Activated CD8-positive, alpha-beta T cell treated with anti-CD3 and anti-CD28 coated beads for 36 hours (primary cell): ENCODE measurements at regions of chr14 and their contacts with region 1.

Region 1: GRCh38 chr14:93115069-93115820 is 480 bp downstream of the ITPK1 start:
- DNase-seq: peak; percentile 84
- ATAC-seq: peak; percentile 71
- H3K4me3 Mint-ChIP-seq: peak overlapping the region; percentile 77
- H3K27ac Mint-ChIP-seq: peak overlapping the region; percentile 67
- H3K4me1 Mint-ChIP-seq: peaks cover 28% of the 10 kb centered on the region
- H3K27me3 Mint-ChIP-seq: no peaks in the 10 kb centered on the region
- CTCF ChIP-seq: no peak

Region 2: GRCh38 chr14:93042968-93043940 is 72.0 kb before region 1 on chr14:
- CTCF ChIA-PET with region 1: interaction called, 13 read pairs
- POLR2A ChIA-PET with region 1: no interaction called
- intact Hi-C with region 1: no loop called
- DNase-seq: no peak
- ATAC-seq: peak; percentile 47
- H3K4me3 Mint-ChIP-seq: no peak overlapping the region
- H3K27ac Mint-ChIP-seq: peak overlapping the region; percentile 43
- H3K4me1 Mint-ChIP-seq: peaks cover 76% of the 10 kb centered on the region
- H3K27me3 Mint-ChIP-seq: no peaks in the 10 kb centered on the region
- CTCF ChIP-seq: no peak

Region 3: DNA sequence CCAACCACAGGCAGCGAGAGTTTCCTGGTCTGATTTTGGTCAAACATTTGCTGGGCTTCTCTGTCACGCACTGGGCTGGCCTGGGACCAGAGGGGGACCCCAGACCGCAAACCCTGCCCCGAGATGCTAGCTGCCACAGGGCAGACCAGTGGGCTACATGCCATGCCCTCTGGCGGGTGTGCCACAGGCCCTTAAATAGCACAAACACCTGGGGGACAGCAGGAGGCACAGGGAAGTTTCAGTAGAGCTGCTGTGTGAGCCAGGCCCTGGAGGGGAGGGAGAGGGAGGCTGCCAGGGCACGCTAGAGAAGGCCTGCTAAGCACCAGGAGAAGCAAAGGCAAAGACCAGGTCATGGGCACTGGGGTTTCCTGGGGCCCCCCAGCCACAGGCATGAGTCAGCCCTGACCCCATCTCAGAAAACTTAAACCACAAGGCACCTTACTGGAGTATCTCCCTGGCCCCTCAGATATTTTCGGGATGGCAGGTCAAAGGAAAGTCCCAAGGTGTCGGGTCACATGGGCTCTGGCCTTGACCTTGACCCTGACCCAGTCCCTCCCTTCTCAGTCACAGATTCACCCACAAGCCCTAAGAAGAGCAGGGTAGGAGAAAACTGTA is 28.7 kb before region 1 on chr14:
- CTCF ChIA-PET with region 1: interaction called, 45 read pairs
- POLR2A ChIA-PET with region 1: no interaction called
- intact Hi-C with region 1: no loop called
- DNase-seq: peak; percentile 68
- ATAC-seq: peak; percentile 76
- H3K4me3 Mint-ChIP-seq: no peak overlapping the region
- H3K27ac Mint-ChIP-seq: peak overlapping the region; percentile 70
- H3K4me1 Mint-ChIP-seq: peaks cover 73% of the 10 kb centered on the region
- H3K27me3 Mint-ChIP-seq: no peaks in the 10 kb centered on the region
- CTCF ChIP-seq: no peak

Region 4: GRCh38 chr14:93137864-93138263 is 22.6 kb after region 1 on chr14:
- CTCF ChIA-PET with region 1: interaction called, 180 read pairs
- POLR2A ChIA-PET with region 1: interaction called, 3 read pairs
- intact Hi-C with region 1: loop called (anchors 1 kb)
- DNase-seq: no peak
- ATAC-seq: no peak
- H3K4me3 Mint-ChIP-seq: no peak overlapping the region
- H3K27ac Mint-ChIP-seq: no peak overlapping the region
- H3K4me1 Mint-ChIP-seq: peaks cover 4% of the 10 kb centered on the region
- H3K27me3 Mint-ChIP-seq: no peaks in the 10 kb centered on the region
- CTCF ChIP-seq: no peak

Region 5: GRCh38 chr14:93206793-93207467 is 91.7 kb after region 1 on chr14 and contains the starts of genes GON7 and UBR7:
- CTCF ChIA-PET with region 1: interaction called, 20 read pairs
- POLR2A ChIA-PET with region 1: no interaction called
- intact Hi-C with region 1: no loop called
- DNase-seq: peak; percentile 93
- ATAC-seq: peak; percentile 93
- H3K4me3 Mint-ChIP-seq: peak within 1 kb of the TSS; percentile 70
- H3K27ac Mint-ChIP-seq: peak within 1 kb of the TSS; percentile 95
- H3K4me1 Mint-ChIP-seq: peaks cover 36% of the 10 kb centered on the region
- H3K27me3 Mint-ChIP-seq: no peaks in the 10 kb centered on the region
- CTCF ChIP-seq: no peak
- total RNA-seq, gene GON7: 15.6 to 16.8 TPM
- total RNA-seq, gene UBR7: 38.5 to 39.7 TPM